ENCODE measurements at regions of chr17 and their contacts with region 1.

Region 1: GRCh38 chr17:63819585-63820537 is 7.4 kb upstream of the PSMC5 start:
- DNase-seq: no peak
- ATAC-seq: peak in 2 of 4 donors; percentile 31 to 71
- H3K4me3 ChIP-seq: no peak overlapping the region
- H3K27ac ChIP-seq: peak overlapping the region in 8 of 12 donors; percentile 13 to 64 (median 44)
- H3K4me1 ChIP-seq: peaks cover 0 to 12% (median under 1%) of the 10 kb centered on the region in 12 donors
- H3K27me3 ChIP-seq: no peaks in the 10 kb centered on the region
- CTCF ChIP-seq: no peak
- POLR2A ChIP-seq: no peak

Region 2: GRCh38 chr17:63751806-63752205 is 68.1 kb before region 1 on chr17:
- intact Hi-C with region 1: loop called in 2 of 10 experiments (anchors 5 to 10 kb)
- DNase-seq: peak in 1 of 5 donors; percentile 32
- ATAC-seq: peak in 1 of 4 donors; percentile 34
- H3K4me3 ChIP-seq: no peak overlapping the region
- H3K27ac ChIP-seq: peak overlapping the region in 1 of 12 donors; percentile 75
- H3K4me1 ChIP-seq: peaks cover 0 to 12% (median 0%) of the 10 kb centered on the region in 12 donors
- H3K27me3 ChIP-seq: no peaks in the 10 kb centered on the region
- CTCF ChIP-seq: no peak
- POLR2A ChIP-seq: no peak

Region 3: GRCh38 chr17:63785556-63785955 is 34.3 kb before region 1 on chr17:
- intact Hi-C with region 1: no loop called
- DNase-seq: no peak
- ATAC-seq: no peak
- H3K4me3 ChIP-seq: no peak overlapping the region
- H3K27ac ChIP-seq: no peak overlapping the region
- H3K4me1 ChIP-seq: peaks cover 0 to 11% (median 0%) of the 10 kb centered on the region in 12 donors
- H3K27me3 ChIP-seq: no peaks in the 10 kb centered on the region
- CTCF ChIP-seq: no peak
- POLR2A ChIP-seq: no peak

Region 4: DNA sequence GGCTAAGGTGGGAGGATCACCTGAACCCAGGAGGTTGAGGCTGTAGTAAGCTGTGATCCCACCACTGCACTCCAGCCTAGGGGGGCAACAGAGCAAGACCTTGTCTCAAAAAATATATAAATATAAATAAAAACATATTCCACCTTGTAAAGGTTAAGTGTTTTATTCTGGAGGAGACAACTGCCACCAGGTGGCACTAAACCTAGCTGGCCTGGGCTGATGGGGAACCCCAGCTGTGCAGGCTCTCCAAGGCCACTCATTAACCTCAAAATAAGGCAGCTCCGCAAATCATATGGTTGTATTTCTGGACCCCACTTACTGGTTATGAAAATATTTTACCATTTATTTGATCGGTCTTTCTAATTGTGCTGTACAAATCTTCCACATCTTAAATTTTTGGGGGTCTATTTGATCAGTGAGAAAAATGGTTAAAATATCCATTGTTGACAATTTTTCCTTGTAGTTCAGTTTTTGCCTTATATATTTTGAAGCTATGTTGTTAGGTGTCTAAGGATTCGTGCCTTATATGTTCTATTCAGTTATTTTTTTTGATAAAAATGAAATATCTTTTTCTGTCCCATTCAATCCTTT is 209.1 kb after region 1 on chr17:
- intact Hi-C with region 1: no loop called
- DNase-seq: peak in 4 of 5 donors; percentile 48 to 72 (median 62)
- ATAC-seq: peak in 3 of 4 donors; percentile 55 to 74 (median 70)
- H3K4me3 ChIP-seq: no peak overlapping the region
- H3K27ac ChIP-seq: no peak overlapping the region
- H3K4me1 ChIP-seq: peaks cover 0 to 21% (median 5%) of the 10 kb centered on the region in 12 donors
- H3K27me3 ChIP-seq: no peaks in the 10 kb centered on the region
- CTCF ChIP-seq: peak; percentile 74 to 87 (median 80)
- POLR2A ChIP-seq: no peak

Measured in heart left ventricle (tissue), 16 donors.